Activated CD4-positive, alpha-beta memory T cell treated with anti-CD3 and anti-CD28 coated beads for 36 hours (primary cell): ENCODE measurements at regions of chr22 and their contacts with region 1.

Region 1: DNA sequence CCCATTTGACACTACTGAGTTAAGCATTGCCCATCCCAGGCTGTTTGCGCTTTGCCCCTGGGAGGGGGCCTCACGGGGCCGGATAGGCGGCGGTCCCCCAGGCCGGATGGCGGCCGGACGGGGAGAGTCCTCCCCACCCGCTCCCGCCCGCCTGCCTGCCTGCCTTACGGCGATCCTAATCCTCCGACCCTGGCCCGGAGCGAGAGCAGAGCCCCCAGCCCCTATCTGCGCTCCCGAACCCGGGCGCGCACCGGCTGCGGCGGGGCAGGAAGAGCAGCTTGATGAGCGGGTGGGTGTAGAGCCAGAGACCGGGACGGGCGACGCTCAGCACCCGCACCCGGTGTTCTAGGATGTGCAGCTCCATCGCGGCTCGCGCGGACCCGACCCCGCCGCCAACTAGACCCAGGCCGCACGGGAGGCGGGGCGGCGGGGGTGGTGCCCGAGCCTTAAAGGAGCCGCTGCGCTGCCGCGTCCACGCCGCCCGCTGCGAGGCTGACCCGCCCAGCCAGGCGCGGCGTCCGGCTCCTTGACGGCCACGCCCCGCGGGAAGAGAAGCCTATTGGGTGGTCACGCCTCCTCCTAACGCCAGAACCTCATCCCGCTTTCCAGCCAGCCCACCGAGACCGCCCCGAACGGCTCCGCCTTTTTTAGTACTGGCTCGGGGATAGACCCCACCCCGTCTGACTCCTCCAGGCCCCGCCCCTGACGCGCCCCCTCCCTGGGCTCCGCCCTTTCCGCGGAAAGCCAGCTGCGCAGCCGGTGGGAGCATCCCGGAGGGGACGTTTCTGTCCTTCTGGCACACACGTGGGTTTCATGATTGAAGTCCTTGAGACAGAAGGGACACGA is at the start of gene CASTOR1:
- DNase-seq: peak; percentile 94
- H3K4me3 Mint-ChIP-seq: peak within 1 kb of the TSS; percentile 76
- H3K27ac Mint-ChIP-seq: peak within 1 kb of the TSS; percentile 69
- H3K4me1 Mint-ChIP-seq: peaks cover 22% of the 10 kb centered on the region
- H3K27me3 Mint-ChIP-seq: no peaks in the 10 kb centered on the region
- total RNA-seq, gene CASTOR1: 3.6 to 4.0 TPM

Region 2: DNA sequence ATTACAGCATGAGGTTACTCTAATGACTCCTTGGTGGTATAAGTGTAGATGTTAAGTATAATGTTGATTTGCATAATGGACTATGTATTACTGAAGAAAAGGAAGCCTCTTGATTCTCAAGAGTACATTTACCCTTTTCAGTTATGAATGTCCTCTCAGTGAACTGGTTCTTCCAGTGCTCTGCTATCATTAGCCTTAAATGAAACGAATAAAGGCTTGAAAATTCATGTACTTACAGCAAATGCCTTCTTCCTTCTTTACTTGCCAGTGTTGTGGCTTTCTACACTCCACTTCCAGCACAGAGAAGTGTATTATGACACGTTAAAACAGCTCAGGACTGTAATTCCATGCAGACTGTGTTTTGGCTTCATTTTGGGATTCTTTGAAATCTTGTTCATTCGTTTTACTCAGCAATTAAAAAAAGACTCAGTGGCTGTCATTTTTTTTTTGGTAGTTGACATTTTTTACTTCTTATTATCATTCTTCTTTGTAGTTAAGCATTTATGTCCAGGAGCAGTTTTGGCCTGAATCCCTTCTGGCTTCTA is 309.5 kb before region 1 on chr22:
- CTCF ChIA-PET with region 1: no interaction called
- POLR2A ChIA-PET with region 1: no interaction called
- intact Hi-C with region 1: no loop called
- DNase-seq: no peak
- H3K4me3 Mint-ChIP-seq: no peak overlapping the region
- H3K27ac Mint-ChIP-seq: no peak overlapping the region
- H3K4me1 Mint-ChIP-seq: no peaks in the 10 kb centered on the region
- H3K27me3 Mint-ChIP-seq: no peaks in the 10 kb centered on the region

Region 3: GRCh38 chr22:30121960-30122359 is 167.4 kb before region 1 on chr22:
- CTCF ChIA-PET with region 1: interaction called, 10 read pairs
- POLR2A ChIA-PET with region 1: no interaction called
- intact Hi-C with region 1: no loop called
- DNase-seq: peak; percentile 21
- H3K4me3 Mint-ChIP-seq: no peak overlapping the region
- H3K27ac Mint-ChIP-seq: peak overlapping the region; percentile 11
- H3K4me1 Mint-ChIP-seq: peaks cover 19% of the 10 kb centered on the region
- H3K27me3 Mint-ChIP-seq: no peaks in the 10 kb centered on the region

Region 4: GRCh38 chr22:30230779-30231461 is 58.4 kb before region 1 on chr22:
- CTCF ChIA-PET with region 1: no interaction called
- POLR2A ChIA-PET with region 1: no interaction called
- intact Hi-C with region 1: no loop called
- DNase-seq: no peak
- H3K4me3 Mint-ChIP-seq: no peak overlapping the region
- H3K27ac Mint-ChIP-seq: no peak overlapping the region
- H3K4me1 Mint-ChIP-seq: peaks cover 11% of the 10 kb centered on the region
- H3K27me3 Mint-ChIP-seq: no peaks in the 10 kb centered on the region

Region 5: GRCh38 chr22:30262917-30263741 is 26.2 kb before region 1 on chr22:
- CTCF ChIA-PET with region 1: interaction called, 154 read pairs
- POLR2A ChIA-PET with region 1: interaction called, 6 read pairs
- intact Hi-C with region 1: loop called (anchors 1 kb)
- DNase-seq: peak; percentile 86
- H3K4me3 Mint-ChIP-seq: peak overlapping the region; percentile 71
- H3K27ac Mint-ChIP-seq: peak overlapping the region; percentile 69
- H3K4me1 Mint-ChIP-seq: peaks cover 34% of the 10 kb centered on the region
- H3K27me3 Mint-ChIP-seq: no peaks in the 10 kb centered on the region

Region 6: DNA sequence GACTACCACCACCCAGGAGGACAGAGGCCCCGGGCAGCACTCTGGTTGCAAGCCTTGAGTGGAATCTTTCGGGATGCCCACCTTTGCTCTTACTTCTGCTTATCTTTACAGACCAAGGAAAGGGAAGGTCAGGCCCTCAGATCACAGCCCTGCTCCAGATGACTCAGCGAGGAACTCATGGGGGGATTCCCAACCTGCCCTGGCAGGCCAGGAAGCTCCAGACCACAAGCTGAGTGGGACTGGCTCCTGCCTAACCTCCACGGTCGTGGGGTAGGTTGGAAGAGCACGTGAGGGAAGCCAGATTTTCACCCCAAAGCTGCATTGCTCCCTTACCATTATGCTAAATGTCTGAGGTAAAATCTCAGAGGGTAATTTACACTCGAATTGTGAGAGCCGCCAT is 25.6 kb after region 1 on chr22:
- CTCF ChIA-PET with region 1: interaction called, 117 read pairs
- POLR2A ChIA-PET with region 1: no interaction called
- intact Hi-C with region 1: no loop called
- DNase-seq: peak; percentile 76
- H3K4me3 Mint-ChIP-seq: no peak overlapping the region
- H3K27ac Mint-ChIP-seq: peak overlapping the region; percentile 84
- H3K4me1 Mint-ChIP-seq: peaks cover 93% of the 10 kb centered on the region
- H3K27me3 Mint-ChIP-seq: no peaks in the 10 kb centered on the region

Region 7: DNA sequence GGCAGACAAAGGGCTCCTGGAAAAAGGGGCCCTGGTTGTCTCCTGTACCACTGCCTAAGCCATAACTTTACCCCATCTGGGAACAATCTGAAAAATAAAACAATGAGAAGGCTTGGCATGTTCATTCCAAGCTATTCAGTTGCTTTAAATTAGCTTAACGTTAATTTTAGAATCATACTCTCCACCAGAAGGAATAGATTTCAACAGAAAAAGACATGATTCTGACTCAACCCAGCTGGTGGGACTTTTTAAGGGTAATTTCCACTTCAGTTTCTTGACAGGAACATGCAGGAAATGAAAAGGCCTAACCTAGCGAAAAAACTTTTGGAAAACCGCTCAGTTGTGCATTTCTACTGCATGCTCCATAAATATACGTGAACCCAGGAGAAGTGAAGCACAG is 59.5 kb after region 1 on chr22:
- CTCF ChIA-PET with region 1: interaction called, 41 read pairs
- POLR2A ChIA-PET with region 1: interaction called, 8 read pairs
- intact Hi-C with region 1: no loop called
- DNase-seq: no peak
- H3K4me3 Mint-ChIP-seq: peak overlapping the region; percentile 44
- H3K27ac Mint-ChIP-seq: peak overlapping the region; percentile 89
- H3K4me1 Mint-ChIP-seq: peaks cover 89% of the 10 kb centered on the region
- H3K27me3 Mint-ChIP-seq: no peaks in the 10 kb centered on the region

Region 8: DNA sequence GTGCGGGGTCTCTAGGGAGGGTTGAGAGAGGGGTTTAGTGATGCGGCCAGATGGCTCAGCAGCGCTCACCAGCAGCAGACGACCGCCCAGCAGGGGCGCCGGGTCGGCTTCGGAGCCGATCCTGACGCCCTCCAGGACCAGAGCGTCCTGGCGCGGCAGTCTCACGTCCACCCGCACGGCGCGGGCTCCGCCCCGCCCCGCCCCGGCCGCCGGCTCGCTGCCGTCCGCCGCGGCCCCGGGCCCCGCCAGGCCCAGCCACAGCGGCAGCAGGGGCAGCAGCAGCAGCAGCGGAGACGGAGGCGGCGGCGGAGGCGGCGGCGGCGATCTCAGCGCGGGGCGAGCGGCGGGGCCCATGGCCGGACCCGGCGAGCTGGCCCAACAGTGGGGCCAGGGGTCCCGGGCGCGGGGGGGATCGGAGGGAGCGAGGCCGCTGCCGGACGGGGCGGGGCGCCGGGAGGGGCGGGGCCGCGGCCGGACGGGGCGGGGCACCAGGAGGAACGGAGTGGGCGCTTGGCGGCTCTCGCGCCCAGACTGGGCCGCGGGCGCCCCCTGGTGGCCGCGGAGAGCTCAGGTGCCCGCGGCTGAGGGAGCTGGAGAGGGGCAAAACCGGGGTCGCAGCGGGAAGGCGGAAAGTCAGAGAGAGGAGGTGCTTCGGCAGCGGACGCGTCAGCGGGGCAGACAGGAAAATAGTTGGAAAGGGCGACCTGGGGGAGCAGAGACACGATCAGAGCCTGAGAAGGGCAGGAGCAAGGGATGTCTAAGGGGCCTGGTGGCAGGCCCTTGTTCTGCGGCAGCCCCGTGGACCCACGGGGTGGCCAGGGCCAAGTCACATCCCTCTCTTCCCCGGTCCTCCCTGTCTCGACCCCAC is 97.8 kb after region 1 on chr22 and contains the start of gene RNF215:
- CTCF ChIA-PET with region 1: interaction called, 414 read pairs
- POLR2A ChIA-PET with region 1: interaction called, 31 read pairs
- intact Hi-C with region 1: loop called (anchors 1 kb)
- DNase-seq: peak; percentile 84
- H3K4me3 Mint-ChIP-seq: peak within 1 kb of the TSS; percentile 80
- H3K27ac Mint-ChIP-seq: peak within 1 kb of the TSS; percentile 39
- H3K4me1 Mint-ChIP-seq: peaks cover 24% of the 10 kb centered on the region
- H3K27me3 Mint-ChIP-seq: peaks cover 1% of the 10 kb centered on the region
- total RNA-seq, gene RNF215: 8.8 to 10.2 TPM

Region 9: GRCh38 chr22:30485362-30485988 is 196.1 kb after region 1 on chr22:
- CTCF ChIA-PET with region 1: interaction called, 25 read pairs
- POLR2A ChIA-PET with region 1: no interaction called
- intact Hi-C with region 1: loop called (anchors 2 kb)
- DNase-seq: peak; percentile 83
- H3K4me3 Mint-ChIP-seq: no peak overlapping the region
- H3K27ac Mint-ChIP-seq: no peak overlapping the region
- H3K4me1 Mint-ChIP-seq: no peaks in the 10 kb centered on the region
- H3K27me3 Mint-ChIP-seq: no peaks in the 10 kb centered on the region